CD8-positive, alpha-beta T cell (primary cell): ENCODE measurements at regions of chr17 and their contacts with region 1.

Region 1: GRCh38 chr17:38982858-38983746 is 15.9 kb upstream of the FBXO47 start:
- DNase-seq: peak in 8 of 9 experiments; percentile 16 to 82 (median 55)
- ATAC-seq: peak; percentile 84
- H3K4me3 ChIP-seq: no peak overlapping the region
- H3K4me3 Mint-ChIP-seq: no peak overlapping the region
- H3K27ac ChIP-seq: no peak overlapping the region
- H3K27ac Mint-ChIP-seq: no peak overlapping the region
- H3K4me1 ChIP-seq: no peaks in the 10 kb centered on the region
- H3K4me1 Mint-ChIP-seq: peaks cover 2% of the 10 kb centered on the region
- H3K27me3 ChIP-seq: no peaks in the 10 kb centered on the region
- H3K27me3 Mint-ChIP-seq: no peaks in the 10 kb centered on the region
- CTCF ChIP-seq: peak; percentile 72

Region 2: GRCh38 chr17:39018267-39019134 is 35.4 kb after region 1 on chr17:
- CTCF ChIA-PET with region 1: interaction called, 20 read pairs
- POLR2A ChIA-PET with region 1: no interaction called
- intact Hi-C with region 1: no loop called
- DNase-seq: no peak
- ATAC-seq: no peak
- H3K4me3 ChIP-seq: no peak overlapping the region
- H3K4me3 Mint-ChIP-seq: no peak overlapping the region
- H3K27ac ChIP-seq: no peak overlapping the region
- H3K27ac Mint-ChIP-seq: peak overlapping the region; percentile 66
- H3K4me1 ChIP-seq: peaks cover 31% of the 10 kb centered on the region
- H3K4me1 Mint-ChIP-seq: peaks cover 27% of the 10 kb centered on the region
- H3K27me3 ChIP-seq: no peaks in the 10 kb centered on the region
- H3K27me3 Mint-ChIP-seq: no peaks in the 10 kb centered on the region
- CTCF ChIP-seq: no peak

Region 3: GRCh38 chr17:39057701-39058206 is 74.7 kb after region 1 on chr17:
- CTCF ChIA-PET with region 1: interaction called, 20 read pairs
- POLR2A ChIA-PET with region 1: no interaction called
- intact Hi-C with region 1: loop called in 1 of 2 experiments (anchors 5 kb)
- DNase-seq: no peak
- ATAC-seq: no peak
- H3K4me3 ChIP-seq: no peak overlapping the region
- H3K4me3 Mint-ChIP-seq: peak overlapping the region; percentile 55
- H3K27ac ChIP-seq: no peak overlapping the region
- H3K27ac Mint-ChIP-seq: no peak overlapping the region
- H3K4me1 ChIP-seq: peaks cover 11% of the 10 kb centered on the region
- H3K4me1 Mint-ChIP-seq: peaks cover 16% of the 10 kb centered on the region
- H3K27me3 ChIP-seq: no peaks in the 10 kb centered on the region
- H3K27me3 Mint-ChIP-seq: peaks cover under 1% of the 10 kb centered on the region
- CTCF ChIP-seq: no peak

Region 4: DNA sequence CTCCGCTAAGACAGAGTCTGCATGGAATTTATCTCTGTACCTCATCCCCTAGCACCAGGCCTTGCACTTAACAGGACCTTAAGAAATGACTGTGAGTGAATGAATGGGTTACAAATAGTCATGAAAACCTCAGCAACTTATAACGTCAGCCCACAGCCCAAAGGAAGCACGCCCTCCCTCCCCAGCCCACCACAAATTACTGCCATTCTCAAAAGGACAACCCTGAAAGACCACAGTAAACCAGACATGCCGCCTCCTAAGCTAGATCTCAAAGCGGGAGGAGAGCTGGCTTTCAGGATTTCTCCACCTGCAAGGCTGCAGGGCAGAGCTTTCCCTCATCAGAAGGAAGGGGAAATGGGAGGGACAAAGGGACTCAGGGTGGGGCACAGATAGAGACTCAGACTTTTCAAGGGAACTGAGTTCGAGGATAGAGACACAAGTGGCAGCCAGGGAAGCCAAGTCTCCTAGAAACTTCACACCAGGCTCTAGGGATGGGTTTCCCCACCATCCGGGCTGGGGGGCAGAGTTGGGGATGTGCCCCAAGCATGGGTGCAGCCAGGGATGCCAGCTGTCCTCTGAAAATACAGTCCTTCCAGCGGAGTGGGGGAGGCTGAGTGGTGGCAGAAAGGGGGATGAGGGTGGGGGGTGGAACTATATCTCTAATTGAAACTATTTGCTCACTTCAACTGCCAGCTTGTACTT is 111.7 kb after region 1 on chr17:
- CTCF ChIA-PET with region 1: interaction called, 17 read pairs
- POLR2A ChIA-PET with region 1: no interaction called
- intact Hi-C with region 1: loop called (anchors 1 to 2 kb)
- DNase-seq: peak; percentile 25 to 80 (median 57)
- ATAC-seq: peak; percentile 59
- H3K4me3 ChIP-seq: peak overlapping the region; percentile 15 to 27
- H3K4me3 Mint-ChIP-seq: peak overlapping the region; percentile 71
- H3K27ac ChIP-seq: peak overlapping the region; percentile 44 to 70
- H3K27ac Mint-ChIP-seq: peak overlapping the region; percentile 92
- H3K4me1 ChIP-seq: peaks cover 87% of the 10 kb centered on the region
- H3K4me1 Mint-ChIP-seq: peaks cover 85% of the 10 kb centered on the region
- H3K27me3 ChIP-seq: no peaks in the 10 kb centered on the region
- H3K27me3 Mint-ChIP-seq: no peaks in the 10 kb centered on the region
- CTCF ChIP-seq: no peak

Region 5: GRCh38 chr17:39144416-39144840 is 161.3 kb after region 1 on chr17:
- CTCF ChIA-PET with region 1: interaction called, 182 read pairs
- POLR2A ChIA-PET with region 1: no interaction called
- intact Hi-C with region 1: no loop called
- DNase-seq: no peak
- ATAC-seq: no peak
- H3K4me3 ChIP-seq: no peak overlapping the region
- H3K4me3 Mint-ChIP-seq: no peak overlapping the region
- H3K27ac ChIP-seq: no peak overlapping the region
- H3K27ac Mint-ChIP-seq: peak overlapping the region; percentile 55
- H3K4me1 ChIP-seq: peaks cover 13% of the 10 kb centered on the region
- H3K4me1 Mint-ChIP-seq: peaks cover 32% of the 10 kb centered on the region
- H3K27me3 ChIP-seq: no peaks in the 10 kb centered on the region
- H3K27me3 Mint-ChIP-seq: no peaks in the 10 kb centered on the region
- CTCF ChIP-seq: no peak

Region 6: GRCh38 chr17:39174907-39175694 is 192.0 kb after region 1 on chr17:
- CTCF ChIA-PET with region 1: interaction called, 189 read pairs
- POLR2A ChIA-PET with region 1: interaction called, 3 read pairs
- intact Hi-C with region 1: loop called (anchors 1 kb)
- DNase-seq: peak; percentile 56 to 89 (median 83)
- ATAC-seq: peak; percentile 93
- H3K4me3 ChIP-seq: no peak overlapping the region
- H3K4me3 Mint-ChIP-seq: no peak overlapping the region
- H3K27ac ChIP-seq: no peak overlapping the region
- H3K27ac Mint-ChIP-seq: no peak overlapping the region
- H3K4me1 ChIP-seq: peaks cover 15% of the 10 kb centered on the region
- H3K4me1 Mint-ChIP-seq: peaks cover 23% of the 10 kb centered on the region
- H3K27me3 ChIP-seq: no peaks in the 10 kb centered on the region
- H3K27me3 Mint-ChIP-seq: no peaks in the 10 kb centered on the region
- CTCF ChIP-seq: peak; percentile 85

Region 7: DNA sequence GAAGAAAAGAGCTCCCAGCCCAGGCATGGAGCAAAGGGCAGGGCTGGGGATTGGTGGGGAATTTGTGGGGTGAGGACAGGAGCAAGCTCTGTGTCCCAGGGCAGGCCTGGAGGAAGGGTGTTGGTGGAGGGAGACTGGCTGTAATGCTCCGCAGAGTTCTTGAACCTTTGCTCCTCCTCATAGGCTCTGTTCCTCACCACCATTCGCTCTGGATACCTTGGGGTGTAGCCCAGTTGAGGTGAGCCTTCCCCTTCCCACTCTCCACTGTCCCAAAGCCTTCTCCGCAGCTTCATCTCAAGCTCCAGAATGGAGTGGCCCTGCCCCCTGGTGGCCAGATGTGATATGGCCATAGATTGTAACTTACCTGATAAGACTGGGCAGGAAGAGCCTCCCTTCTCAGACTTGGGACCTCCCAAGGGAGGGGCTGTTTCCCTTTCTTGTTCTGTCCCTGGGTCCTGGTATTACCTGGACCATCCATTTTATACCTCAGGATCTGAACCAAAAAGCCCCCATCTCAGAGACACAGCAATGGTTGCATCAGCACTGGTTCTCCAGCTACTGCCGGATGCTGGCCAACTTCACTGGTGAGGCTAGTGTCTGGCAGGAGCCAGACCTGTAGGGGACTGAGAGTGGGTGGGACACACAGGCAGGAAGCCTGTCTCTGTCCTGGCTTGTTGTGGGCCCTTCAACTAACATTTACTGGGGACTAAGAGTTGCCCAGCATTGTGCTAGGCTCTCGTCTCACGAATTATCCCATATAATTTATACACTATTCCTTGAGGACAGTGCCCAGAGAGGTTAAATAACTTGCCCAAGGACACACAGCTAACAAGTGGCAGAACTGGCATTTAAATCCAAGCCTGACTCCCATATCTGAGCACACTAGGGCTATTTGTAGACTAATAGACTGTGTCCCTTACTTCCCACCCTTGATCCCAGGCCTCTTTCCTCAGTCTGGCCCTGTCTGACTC is 261.8 kb after region 1 on chr17:
- CTCF ChIA-PET with region 1: interaction called, 30 read pairs
- POLR2A ChIA-PET with region 1: interaction called, 3 read pairs
- intact Hi-C with region 1: no loop called
- DNase-seq: peak; percentile 71 to 94 (median 87)
- ATAC-seq: peak; percentile 94
- H3K4me3 ChIP-seq: no peak overlapping the region
- H3K4me3 Mint-ChIP-seq: no peak overlapping the region
- H3K27ac ChIP-seq: no peak overlapping the region
- H3K27ac Mint-ChIP-seq: no peak overlapping the region
- H3K4me1 ChIP-seq: peaks cover 15% of the 10 kb centered on the region
- H3K4me1 Mint-ChIP-seq: peaks cover 14% of the 10 kb centered on the region
- H3K27me3 ChIP-seq: no peaks in the 10 kb centered on the region
- H3K27me3 Mint-ChIP-seq: peaks cover 2% of the 10 kb centered on the region
- CTCF ChIP-seq: peak; percentile 90

Region 8: DNA sequence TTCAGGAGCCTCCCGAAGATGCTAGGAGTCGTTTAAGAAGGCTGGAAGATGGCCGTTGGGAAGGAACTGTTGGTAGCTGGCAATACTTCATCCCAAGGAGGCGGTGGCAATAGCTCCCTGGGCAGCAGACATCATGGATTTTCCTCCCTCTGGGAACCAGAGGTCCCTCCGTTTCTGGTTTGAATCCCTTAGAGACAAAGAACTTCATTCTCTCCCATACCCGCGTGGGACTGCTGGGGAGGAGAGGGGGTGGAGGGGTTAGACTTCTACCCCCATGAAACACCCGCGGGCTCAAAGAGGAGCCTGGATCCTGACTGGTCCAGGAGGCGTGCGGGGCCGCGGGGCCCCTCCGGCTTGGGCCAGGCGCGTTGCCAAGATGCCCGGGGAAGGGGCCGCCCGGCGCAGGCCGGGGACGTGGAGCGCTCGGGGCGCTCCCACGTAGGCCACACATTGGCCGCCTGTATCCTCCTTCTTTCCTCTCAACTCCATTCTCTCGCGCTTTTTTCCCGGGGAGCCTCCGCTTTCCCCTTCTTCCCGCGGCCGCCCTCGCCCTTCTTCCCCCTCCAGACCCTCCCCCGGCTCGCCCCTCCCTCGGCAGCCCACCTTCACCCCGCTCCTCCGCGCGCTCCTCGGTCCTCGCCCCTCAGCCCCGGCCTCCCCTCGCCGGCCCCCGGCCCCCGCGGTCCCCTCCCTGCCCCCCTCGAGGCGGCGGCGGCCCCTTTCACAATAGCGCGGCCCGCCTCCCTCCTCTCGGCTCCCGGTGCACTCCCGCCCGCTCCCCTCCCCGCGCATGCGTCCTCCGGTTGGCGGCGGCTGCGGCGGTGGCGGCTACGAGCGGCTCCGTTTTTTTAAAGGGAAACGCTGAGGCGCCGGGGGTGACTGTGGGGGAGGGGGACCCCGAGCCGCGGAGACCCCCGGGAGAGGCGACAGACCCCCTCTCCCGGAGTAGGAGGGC is 1138.4 kb after region 1 on chr17 and contains the start of gene MSL1:
- CTCF ChIA-PET with region 1: no interaction called
- POLR2A ChIA-PET with region 1: no interaction called
- intact Hi-C with region 1: no loop called
- DNase-seq: peak; percentile 69 to 92 (median 85)
- ATAC-seq: peak; percentile 65
- H3K4me3 ChIP-seq: peak within 1 kb of the TSS; percentile 75 to 93
- H3K4me3 Mint-ChIP-seq: peak within 1 kb of the TSS; percentile 81
- H3K27ac ChIP-seq: peak within 1 kb of the TSS; percentile 40 to 71
- H3K27ac Mint-ChIP-seq: peak within 1 kb of the TSS; percentile 83
- H3K4me1 ChIP-seq: peaks cover 14% of the 10 kb centered on the region
- H3K4me1 Mint-ChIP-seq: peaks cover 44% of the 10 kb centered on the region
- H3K27me3 ChIP-seq: no peaks in the 10 kb centered on the region
- H3K27me3 Mint-ChIP-seq: no peaks in the 10 kb centered on the region
- CTCF ChIP-seq: no peak
- total RNA-seq, gene MSL1: 43.8 to 46.6 TPM